ENCODE measurements at regions of chr5 and their contacts with region 1.

Region 1: DNA sequence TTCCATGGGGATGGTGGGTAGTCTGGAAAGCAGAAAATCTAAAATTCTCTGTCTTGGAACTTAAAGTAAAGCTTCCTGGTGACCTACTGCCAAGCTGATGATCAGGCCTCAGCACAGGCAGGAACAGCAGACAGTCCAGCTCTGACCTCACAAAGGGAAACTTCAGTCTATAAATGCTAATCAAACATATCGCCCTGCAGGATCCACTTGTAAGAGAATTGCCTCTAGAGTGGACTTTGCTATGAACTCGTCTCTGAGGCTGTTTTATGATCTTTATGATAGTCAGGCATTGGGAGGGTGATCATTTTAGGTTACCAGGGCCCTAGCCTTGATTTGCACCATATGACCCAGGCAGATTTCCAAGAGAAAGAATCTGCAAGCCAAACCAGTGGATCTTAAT is 67.6 kb upstream of the SELENOP start:
- DNase-seq: no peak
- ATAC-seq: no peak
- H3K4me3 Mint-ChIP-seq: no peak overlapping the region
- H3K27ac Mint-ChIP-seq: no peak overlapping the region
- H3K4me1 Mint-ChIP-seq: peaks cover 9% of the 10 kb centered on the region
- H3K27me3 Mint-ChIP-seq: peaks cover 2% of the 10 kb centered on the region

Region 2: GRCh38 chr5:42889311-42889933 is 10.1 kb after region 1 on chr5:
- CTCF ChIA-PET with region 1: interaction called, 12 read pairs
- DNase-seq: peak; percentile 80
- ATAC-seq: peak; percentile 94
- H3K4me3 Mint-ChIP-seq: no peak overlapping the region
- H3K27ac Mint-ChIP-seq: no peak overlapping the region
- H3K4me1 Mint-ChIP-seq: no peaks in the 10 kb centered on the region
- H3K27me3 Mint-ChIP-seq: peaks cover 13% of the 10 kb centered on the region

Measured in activated CD8-positive, alpha-beta memory T cell treated with anti-CD3 and anti-CD28 coated beads, Interleukin-2, amount 10 ng/mL, durations not matched to agents 7 days and 5 days (primary cell).